CD4-positive, alpha-beta memory T cell (primary cell): ENCODE measurements at regions of chr3 and their contacts with region 1.

Region 1: GRCh38 chr3:152322756-152323155 is 54.0 kb downstream of the MBNL1 start:
- DNase-seq: no peak
- H3K4me3 ChIP-seq: no peak overlapping the region
- H3K4me3 Mint-ChIP-seq: peak overlapping the region; percentile 11 to 74 (median 68)
- H3K27ac ChIP-seq: peak overlapping the region; percentile 52
- H3K27ac Mint-ChIP-seq: peak overlapping the region; percentile 44 to 93 (median 79)
- H3K4me1 ChIP-seq: peaks cover 95% of the 10 kb centered on the region
- H3K4me1 Mint-ChIP-seq: peaks cover 62 to 90% (median 73%) of the 10 kb centered on the region in 4 donors
- H3K27me3 ChIP-seq: no peaks in the 10 kb centered on the region
- H3K27me3 Mint-ChIP-seq: no peaks in the 10 kb centered on the region

Region 2: GRCh38 chr3:152281133-152281713 is 41.5 kb before region 1 on chr3:
- CTCF ChIA-PET with region 1: no interaction called
- POLR2A ChIA-PET with region 1: interaction called, 6 read pairs
- intact Hi-C with region 1: loop called (anchors 5 kb)
- DNase-seq: no peak
- H3K4me3 ChIP-seq: no peak overlapping the region
- H3K4me3 Mint-ChIP-seq: peak overlapping the region; percentile 15 to 87 (median 70)
- H3K27ac ChIP-seq: peak overlapping the region; percentile 61
- H3K27ac Mint-ChIP-seq: peak overlapping the region; percentile 62 to 88 (median 76)
- H3K4me1 ChIP-seq: peaks cover 97% of the 10 kb centered on the region
- H3K4me1 Mint-ChIP-seq: peaks cover 61 to 85% (median 72%) of the 10 kb centered on the region in 4 donors
- H3K27me3 ChIP-seq: no peaks in the 10 kb centered on the region
- H3K27me3 Mint-ChIP-seq: no peaks in the 10 kb centered on the region

Region 3: DNA sequence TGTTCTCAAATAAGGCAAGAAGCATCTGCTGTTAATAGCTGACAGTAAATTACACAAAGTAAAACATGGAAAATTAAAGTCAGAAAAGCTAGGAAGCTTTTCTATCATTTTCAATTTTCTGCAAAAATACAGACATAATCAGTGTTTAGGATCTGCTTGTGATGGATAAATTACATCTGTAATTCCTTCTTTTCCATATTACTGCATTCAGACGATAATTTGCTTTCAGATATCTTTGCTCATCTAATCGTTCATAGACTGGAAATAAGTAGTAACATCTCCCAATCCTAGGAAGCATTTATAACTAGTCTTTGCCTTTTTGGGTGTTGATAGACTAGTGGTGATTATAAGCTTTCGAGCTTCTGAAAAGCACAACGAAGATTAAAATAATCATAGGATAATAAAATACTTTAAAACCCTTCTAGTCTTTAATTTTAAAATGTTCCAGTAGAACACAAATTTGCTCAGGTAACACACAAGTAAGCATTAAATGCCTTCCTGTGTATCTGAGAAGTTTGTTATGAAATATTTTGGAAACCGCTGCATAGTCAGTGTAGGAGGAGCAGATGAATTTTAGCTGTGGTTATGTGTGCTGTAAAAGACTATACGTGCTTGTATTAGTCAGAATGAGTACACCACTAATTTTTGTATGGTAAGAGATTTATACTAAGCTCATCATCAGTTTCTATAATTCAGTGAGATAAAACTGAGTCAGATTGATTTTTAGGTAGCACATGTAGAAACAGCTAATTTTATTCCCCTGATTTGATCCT is 13.0 kb before region 1 on chr3:
- CTCF ChIA-PET with region 1: interaction called, 3 read pairs
- POLR2A ChIA-PET with region 1: interaction called, 6 read pairs
- intact Hi-C with region 1: loop called (anchors 1 kb)
- DNase-seq: peak in 3 of 5 donors; percentile 35 to 50 (median 44)
- H3K4me3 ChIP-seq: no peak overlapping the region
- H3K4me3 Mint-ChIP-seq: peak overlapping the region; percentile 4 to 62 (median 44)
- H3K27ac ChIP-seq: peak overlapping the region; percentile 33
- H3K27ac Mint-ChIP-seq: peak overlapping the region; percentile 39 to 90 (median 67)
- H3K4me1 ChIP-seq: peaks cover 88% of the 10 kb centered on the region
- H3K4me1 Mint-ChIP-seq: peaks cover 59 to 83% (median 70%) of the 10 kb centered on the region in 4 donors
- H3K27me3 ChIP-seq: no peaks in the 10 kb centered on the region
- H3K27me3 Mint-ChIP-seq: no peaks in the 10 kb centered on the region

Region 4: GRCh38 chr3:152382312-152383135 is 59.8 kb after region 1 on chr3:
- CTCF ChIA-PET with region 1: no interaction called
- POLR2A ChIA-PET with region 1: interaction called, 3 read pairs
- intact Hi-C with region 1: loop called (anchors 5 kb)
- DNase-seq: no peak
- H3K4me3 ChIP-seq: no peak overlapping the region
- H3K4me3 Mint-ChIP-seq: peak overlapping the region; percentile 12 to 90 (median 80)
- H3K27ac ChIP-seq: peak overlapping the region; percentile 43
- H3K27ac Mint-ChIP-seq: peak overlapping the region; percentile 67 to 90 (median 88)
- H3K4me1 ChIP-seq: peaks cover 97% of the 10 kb centered on the region
- H3K4me1 Mint-ChIP-seq: peaks cover 55 to 92% (median 72%) of the 10 kb centered on the region in 4 donors
- H3K27me3 ChIP-seq: no peaks in the 10 kb centered on the region
- H3K27me3 Mint-ChIP-seq: no peaks in the 10 kb centered on the region

Region 5: DNA sequence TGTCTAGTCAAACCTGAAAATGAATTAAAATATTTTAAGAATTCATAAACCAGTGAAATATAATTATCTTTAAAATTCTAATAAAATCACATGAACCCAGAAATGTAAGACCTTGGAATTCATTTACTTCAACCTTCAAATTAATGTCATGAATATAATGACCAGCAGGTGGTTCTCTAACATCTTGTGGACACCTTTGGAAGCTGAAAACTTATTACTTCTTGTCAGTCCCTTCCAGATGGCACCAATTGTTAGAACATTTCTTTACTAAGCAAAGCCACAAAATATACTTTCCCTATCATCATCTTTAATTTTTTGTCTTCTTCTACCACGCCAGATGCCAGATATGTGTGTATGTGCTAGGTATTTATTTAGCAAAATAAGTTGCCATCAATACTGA is 185.9 kb after region 1 on chr3:
- CTCF ChIA-PET with region 1: no interaction called
- POLR2A ChIA-PET with region 1: no interaction called
- intact Hi-C with region 1: no loop called
- DNase-seq: no peak
- H3K4me3 ChIP-seq: no peak overlapping the region
- H3K4me3 Mint-ChIP-seq: no peak overlapping the region
- H3K27ac ChIP-seq: no peak overlapping the region
- H3K27ac Mint-ChIP-seq: no peak overlapping the region
- H3K4me1 ChIP-seq: no peaks in the 10 kb centered on the region
- H3K4me1 Mint-ChIP-seq: no peaks in the 10 kb centered on the region
- H3K27me3 ChIP-seq: no peaks in the 10 kb centered on the region
- H3K27me3 Mint-ChIP-seq: peaks cover 0 to 6% of the 10 kb centered on the region in 2 donors